Activated naive CD4-positive, alpha-beta T cell treated with anti-CD3 and anti-CD28 coated beads for 36 hours (primary cell): ENCODE measurements at regions of chr1 and their contacts with region 1.

Region 1: DNA sequence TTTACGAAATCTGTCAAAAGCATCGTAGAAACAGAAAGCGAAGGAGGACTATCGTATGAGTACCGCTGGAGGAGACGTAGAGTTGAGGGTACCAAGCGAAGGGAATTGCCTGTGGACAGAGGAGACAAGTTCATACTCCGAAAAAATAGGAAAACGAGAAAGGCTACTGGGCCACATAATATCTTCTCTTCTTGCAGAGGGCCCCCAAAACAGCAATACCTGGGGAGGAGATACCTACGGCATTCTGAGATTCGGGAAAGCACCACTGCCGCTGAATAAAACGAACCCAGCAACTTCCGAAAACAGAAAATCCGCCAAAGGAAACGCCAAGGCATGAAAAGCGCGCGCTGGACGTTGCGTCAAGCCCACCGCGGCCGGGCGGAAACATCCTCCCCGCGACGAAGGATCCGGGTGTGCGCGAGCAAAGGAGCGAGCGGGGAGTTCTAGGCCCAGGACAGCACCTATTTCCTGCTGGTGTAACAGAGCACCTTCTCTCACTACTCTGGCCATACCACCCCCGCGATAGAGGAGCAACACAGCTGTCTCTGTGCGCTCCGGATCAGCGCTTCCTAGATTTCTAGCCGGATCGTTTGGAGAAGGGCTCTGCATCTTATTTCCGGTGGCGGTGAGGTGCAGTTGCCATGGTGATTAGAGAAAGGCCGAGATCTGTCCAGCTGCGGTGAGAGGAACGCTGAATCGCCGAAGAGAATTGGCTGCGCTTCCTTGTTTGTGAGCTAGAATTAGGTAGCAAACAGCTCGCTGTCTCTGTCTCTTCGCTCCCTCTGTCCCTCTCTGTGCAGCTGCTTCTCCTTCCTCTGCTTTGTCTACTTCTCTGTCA is at the starts of genes EFCAB7 and ITGB3BP:
- DNase-seq: peak; percentile 86
- H3K4me3 Mint-ChIP-seq: peak within 1 kb of the TSS; percentile 97
- H3K27ac Mint-ChIP-seq: peak within 1 kb of the TSS; percentile 95
- H3K4me1 Mint-ChIP-seq: peaks cover 24% of the 10 kb centered on the region
- H3K27me3 Mint-ChIP-seq: no peaks in the 10 kb centered on the region
- total RNA-seq, gene EFCAB7: 6.3 to 6.4 TPM
- total RNA-seq, gene ITGB3BP: 59.1 to 59.7 TPM

Region 2: DNA sequence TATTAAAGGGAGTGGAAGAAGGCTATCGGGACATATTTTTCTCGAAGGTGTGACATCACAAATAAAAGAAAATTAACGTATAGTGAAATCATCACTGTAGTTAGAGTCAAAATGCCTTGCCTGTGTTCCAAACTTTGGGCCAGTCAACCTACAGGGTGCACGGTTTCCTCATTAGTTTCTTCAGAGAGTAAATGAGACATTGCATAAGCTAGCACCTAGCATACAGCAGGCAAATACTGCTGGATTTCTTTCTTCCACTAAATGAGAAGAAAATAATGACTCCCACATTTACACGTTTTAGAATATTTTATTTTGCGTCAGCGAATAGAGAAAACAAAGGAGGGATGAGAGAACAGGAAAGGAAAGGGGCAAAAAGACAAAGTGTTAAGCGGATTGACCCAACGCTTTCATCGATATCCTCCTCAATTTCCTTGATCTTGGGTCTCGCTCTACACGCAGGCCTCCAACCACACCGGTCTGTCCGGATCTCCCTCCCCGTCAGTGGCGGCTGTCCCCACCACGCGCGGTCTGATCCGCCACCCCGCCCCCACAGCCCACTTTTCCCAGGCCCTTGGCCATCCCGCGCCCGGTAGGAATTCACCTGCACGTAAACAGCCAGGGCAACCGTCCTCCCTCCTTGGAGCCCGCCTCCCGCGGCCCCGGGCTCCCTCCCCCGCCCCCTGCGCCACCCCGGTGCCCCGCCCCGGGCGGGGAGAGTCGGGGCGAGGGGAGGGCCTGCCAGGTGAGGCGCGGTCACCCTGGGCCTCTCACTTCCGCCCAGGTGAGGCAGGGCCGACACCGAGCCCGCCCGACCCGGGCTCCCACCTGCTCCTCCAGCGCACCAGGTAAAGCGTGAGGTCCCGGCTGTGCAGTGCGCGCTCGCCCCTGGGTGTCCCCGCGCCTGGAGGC is 1781.1 kb before region 1 on chr1 and contains the start of gene PATJ:
- CTCF ChIA-PET with region 1: no interaction called
- intact Hi-C with region 1: loop called (anchors 10 kb)
- DNase-seq: peak; percentile 65
- H3K4me3 Mint-ChIP-seq: peak within 1 kb of the TSS; percentile 93
- H3K27ac Mint-ChIP-seq: peak within 1 kb of the TSS; percentile 83
- H3K4me1 Mint-ChIP-seq: peaks cover 20% of the 10 kb centered on the region
- H3K27me3 Mint-ChIP-seq: no peaks in the 10 kb centered on the region
- total RNA-seq, gene PATJ: 13.3 to 13.5 TPM

Region 3: GRCh38 chr1:62687903-62688686 is 835.0 kb before region 1 on chr1 and contains the start of gene DOCK7:
- CTCF ChIA-PET with region 1: no interaction called
- intact Hi-C with region 1: loop called (anchors 1 kb)
- DNase-seq: peak; percentile 56
- H3K4me3 Mint-ChIP-seq: peak within 1 kb of the TSS; percentile 86
- H3K27ac Mint-ChIP-seq: peak within 1 kb of the TSS; percentile 60
- H3K4me1 Mint-ChIP-seq: peaks cover 26% of the 10 kb centered on the region
- H3K27me3 Mint-ChIP-seq: peaks cover 3% of the 10 kb centered on the region
- total RNA-seq, gene DOCK7: 7.7 to 10.0 TPM

Region 4: GRCh38 chr1:62783723-62784508 is 739.2 kb before region 1 on chr1 and contains the start of gene ATG4C:
- CTCF ChIA-PET with region 1: no interaction called
- intact Hi-C with region 1: loop called (anchors 1 kb)
- DNase-seq: peak; percentile 96
- H3K4me3 Mint-ChIP-seq: no peak within 1 kb of the TSS
- H3K27ac Mint-ChIP-seq: no peak within 1 kb of the TSS
- H3K4me1 Mint-ChIP-seq: peaks cover 13% of the 10 kb centered on the region
- H3K27me3 Mint-ChIP-seq: peaks cover 7% of the 10 kb centered on the region
- total RNA-seq, gene ATG4C: 13.4 to 15.1 TPM

Region 5: GRCh38 chr1:63322114-63322943 is 200.8 kb before region 1 on chr1 and contains the start of gene FOXD3:
- CTCF ChIA-PET with region 1: no interaction called
- intact Hi-C with region 1: loop called (anchors 2 kb)
- DNase-seq: peak; percentile 44
- H3K4me3 Mint-ChIP-seq: peak within 1 kb of the TSS; percentile 77
- H3K27ac Mint-ChIP-seq: peak within 1 kb of the TSS; percentile 54
- H3K4me1 Mint-ChIP-seq: peaks cover 44% of the 10 kb centered on the region
- H3K27me3 Mint-ChIP-seq: peaks cover 71% of the 10 kb centered on the region
- total RNA-seq, gene FOXD3: not detected

Region 6: GRCh38 chr1:63367215-63368103 is 155.7 kb before region 1 on chr1 and contains the start of gene ALG6:
- CTCF ChIA-PET with region 1: no interaction called
- intact Hi-C with region 1: loop called (anchors 1 kb)
- DNase-seq: peak; percentile 91
- H3K4me3 Mint-ChIP-seq: peak within 1 kb of the TSS; percentile 83
- H3K27ac Mint-ChIP-seq: peak within 1 kb of the TSS; percentile 65
- H3K4me1 Mint-ChIP-seq: peaks cover 21% of the 10 kb centered on the region
- H3K27me3 Mint-ChIP-seq: peaks cover 3% of the 10 kb centered on the region
- total RNA-seq, gene ALG6: 11.0 to 13.5 TPM